Heart left ventricle (tissue), 16 donors: ENCODE measurements at regions of chr5 and their contacts with region 1.

Region 1: DNA sequence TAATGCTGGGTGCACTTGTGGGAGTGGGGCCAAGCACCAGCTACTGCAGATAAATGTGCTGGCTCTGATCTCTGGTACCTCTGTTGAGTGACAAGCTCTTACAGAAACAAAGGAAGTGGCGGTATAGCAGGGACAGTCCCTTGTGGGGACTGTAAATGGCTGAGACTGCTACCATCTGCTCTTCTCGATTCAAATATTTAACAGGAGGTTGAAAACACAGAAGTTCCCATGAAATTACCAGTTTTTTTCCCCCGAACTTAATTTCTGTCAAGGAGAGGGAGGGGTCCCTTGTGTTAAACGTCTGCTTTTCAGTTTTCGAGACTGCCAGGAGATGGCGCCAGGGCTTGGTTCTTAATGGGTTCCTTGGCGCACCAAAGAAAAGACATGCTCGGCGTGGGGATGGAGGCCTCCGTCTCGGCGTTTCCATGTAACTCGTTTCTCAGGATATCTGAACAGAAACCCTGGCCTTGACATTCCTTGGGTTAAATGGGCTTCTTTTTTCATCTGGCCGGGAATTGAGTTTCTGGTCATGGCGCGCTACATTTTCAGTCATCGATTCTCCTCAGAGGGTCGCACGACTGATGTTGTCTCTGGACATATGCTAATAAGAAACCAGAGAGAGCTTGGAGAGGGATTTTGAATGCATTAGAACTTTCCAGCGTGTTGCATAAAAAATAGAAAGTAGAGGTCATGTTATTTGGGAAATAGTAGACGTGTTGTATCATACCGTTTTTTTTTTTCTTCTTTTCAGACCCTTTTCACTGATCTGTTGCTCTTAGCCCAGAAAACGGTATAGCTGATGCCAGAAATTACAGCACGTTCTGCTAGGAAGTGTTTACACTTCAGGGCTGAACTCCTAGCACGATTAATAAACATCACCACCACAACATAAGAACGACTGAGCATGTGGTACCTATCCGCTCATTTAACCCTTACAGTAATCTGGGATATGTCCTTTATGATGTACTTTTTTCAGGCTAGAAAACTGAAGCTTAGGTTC is 64.0 kb downstream of the CARTPT start:
- DNase-seq: peak; percentile 76 to 84 (median 80)
- ATAC-seq: peak; percentile 73 to 93 (median 82)
- H3K4me3 ChIP-seq: peak overlapping the region in 9 of 12 donors; percentile 19 to 43 (median 27)
- H3K27ac ChIP-seq: peak overlapping the region in 2 of 12 donors; percentile 8 to 63
- H3K4me1 ChIP-seq: peaks cover 0 to 13% (median 3%) of the 10 kb centered on the region in 12 donors
- H3K27me3 ChIP-seq: no peaks in the 10 kb centered on the region
- CTCF ChIP-seq: peak; percentile 70 to 89 (median 80)
- POLR2A ChIP-seq: no peak

Region 2: DNA sequence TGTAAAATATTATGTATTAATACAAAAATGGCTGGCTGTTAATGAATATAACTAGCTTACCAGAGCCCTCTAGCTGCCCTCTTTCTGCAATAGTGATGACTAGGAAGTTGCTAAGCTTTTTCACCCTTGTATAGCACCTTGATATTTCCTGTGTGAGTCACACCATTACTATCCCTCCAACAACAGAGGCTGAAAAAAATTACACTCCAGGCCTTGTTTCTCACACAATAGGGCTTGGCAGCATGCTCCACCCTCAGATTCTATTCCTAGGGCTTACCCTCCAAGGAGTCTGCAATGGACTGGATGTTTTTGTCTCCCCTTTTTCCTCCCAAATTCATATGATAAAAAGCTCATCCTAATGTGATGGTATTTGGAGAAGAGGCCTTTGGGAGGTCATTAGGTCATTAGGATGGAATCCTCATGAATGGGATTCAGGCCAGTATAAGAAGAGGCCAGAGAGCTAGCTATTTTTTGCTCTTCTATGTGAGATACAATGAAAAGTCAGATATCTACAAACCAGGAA is 139.6 kb after region 1 on chr5:
- intact Hi-C with region 1: loop called in 4 of 10 experiments (anchors 5 to 10 kb)
- DNase-seq: no peak
- ATAC-seq: peak; percentile 62 to 83 (median 71)
- H3K4me3 ChIP-seq: no peak overlapping the region
- H3K27ac ChIP-seq: peak overlapping the region in 11 of 12 donors; percentile 22 to 80 (median 56)
- H3K4me1 ChIP-seq: peaks cover 0 to 39% (median 20%) of the 10 kb centered on the region in 12 donors
- H3K27me3 ChIP-seq: no peaks in the 10 kb centered on the region
- CTCF ChIP-seq: peak in 5 of 12 donors; percentile 11 to 41 (median 34)
- POLR2A ChIP-seq: no peak

Region 3: GRCh38 chr5:71932655-71933338 is 149.7 kb after region 1 on chr5:
- intact Hi-C with region 1: loop called in 4 of 10 experiments (anchors 5 to 10 kb)
- DNase-seq: peak; percentile 50 to 76 (median 68)
- ATAC-seq: peak; percentile 80 to 94 (median 90)
- H3K4me3 ChIP-seq: no peak overlapping the region
- H3K27ac ChIP-seq: peak overlapping the region in 9 of 12 donors; percentile 11 to 66 (median 52)
- H3K4me1 ChIP-seq: peaks cover 0 to 19% (median 11%) of the 10 kb centered on the region in 12 donors
- H3K27me3 ChIP-seq: no peaks in the 10 kb centered on the region
- CTCF ChIP-seq: no peak
- POLR2A ChIP-seq: no peak

Region 4: DNA sequence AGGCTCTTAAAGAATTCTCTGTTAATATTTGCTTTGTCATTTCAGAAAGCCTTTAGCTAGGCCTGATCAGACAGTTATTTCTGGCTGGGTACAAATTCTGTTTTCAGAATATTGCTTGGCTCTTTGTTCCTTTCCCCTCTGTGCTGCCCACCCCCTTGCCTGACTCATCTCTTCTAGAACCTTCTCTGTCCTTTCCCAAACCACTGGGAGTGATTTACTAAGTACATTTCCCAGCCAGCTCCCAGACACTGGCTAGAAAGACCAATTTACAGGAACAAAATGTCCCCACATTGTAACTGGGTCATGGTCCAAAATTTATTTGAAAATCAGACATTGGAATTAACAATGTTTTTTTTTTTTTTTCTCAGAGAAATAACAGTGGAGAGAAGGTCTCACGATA is 191.1 kb after region 1 on chr5:
- intact Hi-C with region 1: loop called in 2 of 10 experiments (anchors 5 to 10 kb)
- DNase-seq: peak in 1 of 5 donors; percentile 35
- ATAC-seq: peak; percentile 47 to 80 (median 56)
- H3K4me3 ChIP-seq: no peak overlapping the region
- H3K27ac ChIP-seq: peak overlapping the region; percentile 15 to 82 (median 54)
- H3K4me1 ChIP-seq: peaks cover 0 to 21% (median 5%) of the 10 kb centered on the region in 12 donors
- H3K27me3 ChIP-seq: no peaks in the 10 kb centered on the region
- CTCF ChIP-seq: no peak
- POLR2A ChIP-seq: no peak

Region 5: DNA sequence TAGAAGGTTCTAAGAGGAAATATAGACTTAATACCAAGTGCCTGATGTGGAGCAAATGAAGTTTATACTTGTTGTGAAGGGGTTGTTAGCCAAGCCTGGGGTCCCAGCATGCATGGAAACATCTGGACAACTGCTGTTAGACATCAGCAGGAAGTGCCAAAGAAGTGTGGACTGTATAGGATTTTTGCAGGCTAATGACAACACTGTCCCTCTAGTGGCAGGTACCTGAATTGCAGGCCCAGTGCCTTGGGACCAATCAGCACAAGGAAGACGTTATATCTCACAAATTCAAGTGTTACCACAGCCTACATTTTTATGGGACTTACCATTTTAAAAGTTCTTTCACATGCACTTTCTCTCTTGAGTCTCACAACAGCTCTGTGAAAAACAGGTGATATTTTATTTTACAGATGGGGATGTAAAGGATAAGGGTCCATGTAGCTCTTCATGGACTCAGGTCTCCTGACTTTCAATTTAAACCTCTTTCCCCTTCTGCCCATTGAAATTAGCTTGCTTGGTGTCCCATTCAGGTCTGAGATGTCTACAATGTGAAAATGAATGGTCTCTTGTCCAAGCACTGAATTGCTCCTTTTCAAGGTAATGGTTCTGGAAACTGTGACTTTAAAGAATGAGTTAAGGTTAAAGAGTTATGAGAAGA is 235.2 kb after region 1 on chr5:
- intact Hi-C with region 1: loop called in 7 of 10 experiments (anchors 5 to 10 kb)
- DNase-seq: no peak
- ATAC-seq: no peak
- H3K4me3 ChIP-seq: no peak overlapping the region
- H3K27ac ChIP-seq: no peak overlapping the region
- H3K4me1 ChIP-seq: peaks cover 0 to 8% (median 0%) of the 10 kb centered on the region in 12 donors
- H3K27me3 ChIP-seq: no peaks in the 10 kb centered on the region
- CTCF ChIP-seq: peak; percentile 63 to 91 (median 76)
- POLR2A ChIP-seq: no peak

Region 6: DNA sequence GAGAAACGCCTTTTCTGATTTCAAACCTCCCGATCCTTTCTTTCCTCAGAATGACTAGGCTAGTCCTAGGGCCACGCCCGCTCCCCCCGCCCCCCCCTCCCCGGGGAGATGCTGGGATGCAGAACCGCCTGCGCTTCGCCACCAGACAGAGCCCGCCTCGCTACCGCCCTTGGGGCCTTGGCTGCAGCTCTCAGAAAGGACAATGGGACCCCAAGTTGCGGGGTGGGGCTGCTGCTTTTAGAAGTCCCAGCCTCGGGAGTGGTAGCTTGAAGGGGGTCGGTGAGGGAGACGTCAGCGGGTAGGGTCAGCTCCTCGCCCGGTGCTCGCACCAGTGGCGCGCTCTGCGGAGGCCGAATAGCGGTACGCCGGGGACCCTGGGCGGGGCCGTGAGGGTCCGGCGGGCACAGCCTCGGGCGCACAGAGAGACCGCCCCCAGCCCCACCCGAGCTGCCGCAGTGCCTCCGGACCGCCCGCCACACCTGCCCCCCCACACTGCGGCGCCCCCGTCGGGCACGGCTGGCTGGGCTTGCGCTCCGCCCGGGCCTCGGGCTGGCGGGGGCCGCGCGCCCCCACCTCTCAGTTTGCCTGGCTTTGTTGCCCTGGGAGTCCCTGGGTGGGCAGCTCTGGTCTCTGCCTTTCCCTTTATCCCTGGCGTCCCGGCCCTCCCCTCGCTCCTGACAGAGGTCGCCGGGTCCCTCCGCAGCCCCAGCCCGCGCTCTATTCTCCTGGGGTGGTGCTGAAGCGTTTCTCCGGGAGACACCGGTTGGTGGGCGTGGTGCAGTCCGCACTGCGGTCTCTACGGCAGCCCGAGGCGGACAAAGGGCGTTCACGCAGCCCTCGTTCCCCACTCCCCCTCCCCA is 325.4 kb after region 1 on chr5:
- intact Hi-C with region 1: loop called (anchors 2 to 10 kb)
- DNase-seq: peak; percentile 82 to 88 (median 84)
- ATAC-seq: peak; percentile 73 to 85 (median 83)
- H3K4me3 ChIP-seq: peak overlapping the region; percentile 53 to 95 (median 88)
- H3K27ac ChIP-seq: peak overlapping the region; percentile 74 to 93 (median 87)
- H3K4me1 ChIP-seq: peaks cover 0 to 46% (median 16%) of the 10 kb centered on the region in 12 donors
- H3K27me3 ChIP-seq: peaks cover 0 to 37% (median 0%) of the 10 kb centered on the region in 9 donors
- CTCF ChIP-seq: no peak
- POLR2A ChIP-seq: peak in 1 of 2 donors; percentile 6

Region 7: DNA sequence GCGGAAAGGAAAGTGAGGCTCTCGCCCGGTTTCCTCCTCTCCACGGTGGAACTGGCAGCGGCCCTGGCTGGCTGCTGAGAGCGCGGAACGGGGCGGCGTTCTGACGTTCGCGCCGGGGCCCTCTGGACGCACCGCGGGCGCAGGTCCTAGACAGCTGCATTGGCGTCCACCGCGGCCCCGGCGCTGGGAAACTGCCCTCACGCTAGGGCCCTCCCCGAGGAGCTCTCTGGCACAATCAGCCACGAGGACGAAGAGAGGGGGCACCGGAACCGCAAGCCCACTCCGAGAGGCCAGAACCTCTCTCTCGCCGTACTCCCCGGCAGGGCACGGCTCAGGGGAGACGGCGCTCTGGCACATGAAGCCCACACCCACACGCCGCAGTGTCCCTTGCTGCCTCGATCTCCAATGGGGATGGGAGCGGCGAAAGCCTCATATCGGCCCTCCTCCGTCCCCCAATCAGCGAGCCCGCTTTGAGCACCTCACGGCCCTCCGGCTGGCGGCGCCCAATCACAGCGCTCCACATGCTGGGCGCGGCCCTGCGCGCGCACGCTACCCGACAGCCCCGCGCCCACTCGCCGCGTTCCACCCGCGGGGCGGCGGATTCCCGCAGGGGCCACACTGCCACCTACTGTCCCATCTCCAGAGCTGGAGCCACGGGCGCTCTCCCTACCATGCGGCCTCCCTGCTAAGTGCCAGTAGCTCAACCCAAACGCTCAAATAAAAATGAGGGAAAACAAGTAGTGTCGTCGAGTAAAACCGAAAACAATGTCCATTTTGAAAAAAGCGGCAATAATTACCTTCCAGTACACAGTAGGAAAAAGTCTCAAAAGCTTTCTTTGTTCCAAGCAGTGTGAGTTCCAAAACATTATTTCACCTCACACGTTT is 525.1 kb after region 1 on chr5:
- intact Hi-C with region 1: loop called (anchors 2 to 5 kb)
- DNase-seq: peak; percentile 97 to 99 (median 99)
- ATAC-seq: peak; percentile 99
- H3K4me3 ChIP-seq: peak overlapping the region; percentile 55 to 87 (median 70)
- H3K27ac ChIP-seq: peak overlapping the region; percentile 81 to 99 (median 94)
- H3K4me1 ChIP-seq: peaks cover 0 to 32% (median 7%) of the 10 kb centered on the region in 12 donors
- H3K27me3 ChIP-seq: no peaks in the 10 kb centered on the region
- CTCF ChIP-seq: peak; percentile 86 to 97 (median 93)
- POLR2A ChIP-seq: peak; percentile 83 to 98